ENCODE measurements at regions of chr6 and their contacts with region 1.

Region 1: GRCh38 chr6:27753668-27754407 is 158.4 kb downstream of the OR2B2 start:
- DNase-seq: peak; percentile 65
- H3K4me3 Mint-ChIP-seq: peak overlapping the region; percentile 83
- H3K27ac Mint-ChIP-seq: peak overlapping the region; percentile 69
- H3K4me1 Mint-ChIP-seq: peaks cover 56% of the 10 kb centered on the region
- H3K27me3 Mint-ChIP-seq: peaks cover 2% of the 10 kb centered on the region

Region 2: GRCh38 chr6:26025894-26026832 is 1727.7 kb before region 1 on chr6:
- intact Hi-C with region 1: loop called (anchors 10 kb)
- DNase-seq: peak; percentile 88
- H3K4me3 Mint-ChIP-seq: peak overlapping the region; percentile 85
- H3K27ac Mint-ChIP-seq: peak overlapping the region; percentile 96
- H3K4me1 Mint-ChIP-seq: peaks cover 93% of the 10 kb centered on the region
- H3K27me3 Mint-ChIP-seq: no peaks in the 10 kb centered on the region

Region 3: GRCh38 chr6:27146706-27147505 is 606.9 kb before region 1 on chr6:
- intact Hi-C with region 1: loop called (anchors 1 kb)
- DNase-seq: peak; percentile 82
- H3K4me3 Mint-ChIP-seq: no peak overlapping the region
- H3K27ac Mint-ChIP-seq: no peak overlapping the region
- H3K4me1 Mint-ChIP-seq: peaks cover 17% of the 10 kb centered on the region
- H3K27me3 Mint-ChIP-seq: no peaks in the 10 kb centered on the region

Region 4: DNA sequence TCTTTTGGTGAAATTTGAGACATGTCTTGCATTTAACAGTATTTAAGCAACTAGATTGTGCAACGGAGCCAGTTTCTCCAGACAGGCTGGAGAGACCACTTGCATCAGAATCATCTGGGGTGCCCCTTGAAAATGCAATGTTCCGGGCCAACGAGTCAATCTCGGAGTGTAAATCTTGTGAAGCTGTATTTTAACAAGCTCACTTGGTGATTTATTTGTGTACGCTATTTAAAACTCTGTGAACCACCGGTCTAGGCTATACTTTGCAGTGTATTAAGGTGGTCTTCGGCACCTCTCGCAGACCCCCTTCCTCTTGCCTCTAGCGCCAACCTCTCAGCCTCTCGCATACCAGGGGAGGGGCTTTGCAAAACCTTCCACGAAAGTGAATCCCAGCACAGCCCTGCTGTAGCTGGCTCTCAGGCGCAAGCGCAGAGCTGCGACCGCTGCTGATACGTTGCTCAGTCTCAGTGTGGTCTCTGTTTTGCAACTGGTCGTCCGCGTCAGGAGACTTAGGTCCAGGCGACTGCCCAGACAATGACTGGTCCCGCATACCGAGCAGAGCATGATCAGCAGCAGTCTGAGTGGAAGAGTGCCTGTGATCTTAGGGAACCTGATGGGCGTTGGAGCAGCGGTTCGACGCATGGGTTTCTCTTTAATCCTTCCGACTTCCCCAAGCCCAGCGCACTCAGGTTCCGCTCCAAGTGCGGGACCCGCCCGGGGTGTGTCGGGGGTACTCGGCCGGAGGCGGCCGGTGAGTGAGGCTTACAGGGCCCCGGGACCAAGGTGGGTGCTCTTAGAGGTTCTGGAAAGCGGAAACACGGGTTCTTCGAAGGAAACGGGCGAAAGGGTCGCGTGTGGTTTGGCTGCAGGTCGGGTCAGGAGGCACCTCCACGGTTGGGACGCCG is 365.3 kb before region 1 on chr6 and contains the start of gene ZNF391:
- intact Hi-C with region 1: loop called (anchors 5 kb)
- DNase-seq: peak; percentile 50
- H3K4me3 Mint-ChIP-seq: peak within 1 kb of the TSS; percentile 90
- H3K27ac Mint-ChIP-seq: peak within 1 kb of the TSS; percentile 66
- H3K4me1 Mint-ChIP-seq: peaks cover 19% of the 10 kb centered on the region
- H3K27me3 Mint-ChIP-seq: peaks cover 7% of the 10 kb centered on the region
- total RNA-seq, gene ZNF391: 0.37 and 0.44 TPM in 2 replicates

Region 5: GRCh38 chr6:27592481-27593199 is 161.2 kb before region 1 on chr6:
- intact Hi-C with region 1: loop called (anchors 5 kb)
- DNase-seq: peak; percentile 51
- H3K4me3 Mint-ChIP-seq: no peak overlapping the region
- H3K27ac Mint-ChIP-seq: no peak overlapping the region
- H3K4me1 Mint-ChIP-seq: peaks cover 6% of the 10 kb centered on the region
- H3K27me3 Mint-ChIP-seq: peaks cover 24% of the 10 kb centered on the region

Region 6: DNA sequence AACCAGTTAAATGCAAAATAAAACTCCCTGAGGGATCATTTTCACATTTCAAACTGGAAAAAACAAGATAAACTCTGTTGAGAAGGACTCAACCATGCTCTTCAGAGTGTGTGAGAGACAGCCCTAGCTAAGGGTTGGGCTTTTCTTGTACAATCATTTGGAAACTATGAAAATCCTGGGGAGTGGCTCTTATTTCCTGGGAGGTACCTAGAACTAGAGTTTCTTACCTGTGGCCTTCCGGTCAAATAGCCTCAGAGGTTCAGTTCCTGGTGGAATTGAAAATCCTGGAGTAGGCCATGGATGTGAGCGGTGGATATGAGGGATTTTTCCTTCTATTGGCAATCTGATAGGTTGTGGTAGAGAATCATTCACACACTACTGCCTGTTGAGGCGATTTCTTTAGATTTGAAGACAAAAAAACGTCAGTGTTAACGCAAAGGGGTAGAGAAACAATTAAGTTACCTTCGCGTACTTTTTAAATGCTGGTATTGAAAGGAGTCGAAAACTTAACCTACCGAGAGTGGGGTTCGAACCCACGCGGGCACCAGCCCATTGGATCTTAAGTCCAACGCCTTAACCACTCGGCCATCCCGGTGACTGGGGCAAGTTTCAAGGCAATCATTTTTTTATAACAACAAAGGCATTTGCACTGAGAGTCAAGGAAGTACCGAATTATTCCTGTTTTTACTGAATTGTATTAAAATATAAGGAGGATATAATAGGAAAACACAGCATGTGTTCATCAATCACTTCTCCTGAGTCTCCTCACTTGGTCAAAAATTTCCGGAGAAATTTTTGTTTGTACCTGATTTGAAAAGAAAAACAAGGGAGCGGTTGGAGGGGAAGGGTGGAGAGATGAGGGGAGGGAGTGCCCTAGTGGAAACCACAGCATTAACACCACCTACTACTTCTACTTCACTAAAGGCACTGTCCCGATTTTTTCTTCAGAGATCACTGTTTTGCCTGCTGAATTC is 32.9 kb before region 1 on chr6:
- intact Hi-C with region 1: no loop called
- DNase-seq: no peak
- H3K4me3 Mint-ChIP-seq: no peak overlapping the region
- H3K27ac Mint-ChIP-seq: no peak overlapping the region
- H3K4me1 Mint-ChIP-seq: peaks cover 29% of the 10 kb centered on the region
- H3K27me3 Mint-ChIP-seq: peaks cover 11% of the 10 kb centered on the region

Region 7: GRCh38 chr6:27765028-27765590 is 11.3 kb after region 1 on chr6:
- intact Hi-C with region 1: no loop called
- DNase-seq: no peak
- H3K4me3 Mint-ChIP-seq: no peak overlapping the region
- H3K27ac Mint-ChIP-seq: no peak overlapping the region
- H3K4me1 Mint-ChIP-seq: peaks cover 15% of the 10 kb centered on the region
- H3K27me3 Mint-ChIP-seq: peaks cover 2% of the 10 kb centered on the region

Region 8: GRCh38 chr6:27778625-27779417 is 25.0 kb after region 1 on chr6:
- intact Hi-C with region 1: no loop called
- DNase-seq: no peak
- H3K4me3 Mint-ChIP-seq: no peak overlapping the region
- H3K27ac Mint-ChIP-seq: no peak overlapping the region
- H3K4me1 Mint-ChIP-seq: no peaks in the 10 kb centered on the region
- H3K27me3 Mint-ChIP-seq: peaks cover 36% of the 10 kb centered on the region

Region 9: GRCh38 chr6:27809939-27810767 is 56.3 kb after region 1 on chr6:
- intact Hi-C with region 1: loop called (anchors 2 kb)
- DNase-seq: peak; percentile 83
- H3K4me3 Mint-ChIP-seq: peak overlapping the region; percentile 91
- H3K27ac Mint-ChIP-seq: peak overlapping the region; percentile 96
- H3K4me1 Mint-ChIP-seq: peaks cover 78% of the 10 kb centered on the region
- H3K27me3 Mint-ChIP-seq: no peaks in the 10 kb centered on the region

Region 10: DNA sequence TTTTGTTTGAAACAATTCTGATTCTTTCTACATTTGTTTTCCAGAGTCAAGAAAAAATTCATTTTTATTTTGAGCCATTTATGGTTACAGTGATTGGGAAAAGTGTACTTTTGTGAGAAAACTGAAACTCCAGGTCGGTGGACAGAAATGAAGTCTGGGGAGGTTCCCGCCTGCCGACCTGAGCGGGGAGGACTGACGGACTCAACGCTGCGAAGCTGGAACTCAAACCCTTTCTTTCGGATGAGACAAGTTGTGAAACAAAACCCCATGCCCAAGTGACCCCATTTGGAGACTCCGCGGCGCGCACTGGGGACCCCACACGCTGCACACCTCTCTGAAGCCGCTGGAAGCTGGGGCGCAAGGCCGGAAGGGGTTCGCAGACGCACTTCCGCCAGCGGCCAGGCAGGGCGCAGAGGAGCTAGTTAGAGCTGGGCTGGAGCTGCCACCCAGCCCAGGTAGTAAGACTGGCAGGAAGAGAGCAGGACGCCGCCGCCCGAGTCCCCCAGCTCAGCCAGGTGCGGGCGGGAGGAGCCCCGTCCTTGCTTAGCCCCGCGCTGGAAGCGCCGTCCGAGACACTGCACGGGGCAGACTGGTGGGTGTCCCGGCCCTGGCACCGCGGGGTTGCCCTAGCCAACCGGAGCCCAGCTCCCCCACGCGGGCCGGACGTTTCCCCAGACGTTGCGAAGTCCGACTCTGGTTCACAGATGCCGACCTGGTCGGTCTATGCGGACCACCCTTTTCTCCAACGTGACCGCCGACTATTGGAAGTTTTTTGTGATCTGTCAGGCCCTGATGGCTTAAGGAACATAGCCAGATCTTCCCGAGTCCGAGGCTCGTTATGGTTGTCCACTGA is 350.8 kb after region 1 on chr6:
- intact Hi-C with region 1: no loop called
- DNase-seq: peak; percentile 75
- H3K4me3 Mint-ChIP-seq: peak overlapping the region; percentile 83
- H3K27ac Mint-ChIP-seq: peak overlapping the region; percentile 61
- H3K4me1 Mint-ChIP-seq: peaks cover 5% of the 10 kb centered on the region
- H3K27me3 Mint-ChIP-seq: peaks cover 18% of the 10 kb centered on the region

Region 11: GRCh38 chr6:28940858-28941680 is 1187.2 kb after region 1 on chr6:
- intact Hi-C with region 1: loop called (anchors 5 kb)
- DNase-seq: peak; percentile 73
- H3K4me3 Mint-ChIP-seq: peak overlapping the region; percentile 95
- H3K27ac Mint-ChIP-seq: peak overlapping the region; percentile 97
- H3K4me1 Mint-ChIP-seq: peaks cover 59% of the 10 kb centered on the region
- H3K27me3 Mint-ChIP-seq: peaks cover 10% of the 10 kb centered on the region

Measured in activated T-helper 1 cell treated with anti-CD3 and anti-CD28 coated beads, Interleukin-12 subunit alpha, Interleukin-12 subunit beta, Interleukin-2, Interleukin-4 antibody, amounts not matched to agents 30 ng/mL and 10 ng/mL and 1 ng/mL, durations not matched to agents 14 hours and 24 hours and 36 hours (primary cell).